GM12878 (cell line): ENCODE measurements at regions of chr1 and their contacts with region 1.

Region 1: GRCh38 chr1:81414488-81415015 is 386.2 kb upstream of the ADGRL2 start:
- DNase-seq: peak; percentile 9
- ATAC-seq: peak; percentile 98
- H3K4me3 ChIP-seq: no peak overlapping the region
- H3K27ac ChIP-seq: no peak overlapping the region
- H3K4me1 ChIP-seq: no peaks in the 10 kb centered on the region
- H3K27me3 ChIP-seq: no peaks in the 10 kb centered on the region; a peak in 1 of 4 replicates
- CTCF ChIP-seq: peak; percentile 77 to 91 (median 85)
- EP300 ChIP-seq: no peak
- POLR2A ChIP-seq: no peak
- RAD21 ChIP-seq: peak; percentile 80

Region 2: DNA sequence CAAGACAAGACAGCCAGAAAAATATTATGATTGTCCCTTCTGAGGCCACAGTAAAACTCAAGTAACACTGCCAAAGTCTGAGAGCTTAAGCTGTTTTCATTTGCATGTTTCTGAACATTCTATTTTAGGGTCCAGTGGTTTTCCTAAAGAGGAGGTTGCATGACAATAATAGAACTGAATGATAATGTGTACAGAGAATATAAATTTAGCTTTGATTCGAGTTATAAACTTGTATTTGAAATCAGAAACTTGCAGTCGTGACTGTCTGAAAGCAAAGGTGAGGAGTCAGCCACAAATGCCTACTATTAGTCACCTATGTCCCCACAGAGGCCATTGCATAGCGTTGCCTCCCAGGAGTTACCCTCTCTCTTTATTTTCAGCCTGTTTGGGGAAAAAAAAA is 23.1 kb after region 1 on chr1:
- CTCF ChIA-PET with region 1: interaction called, 10 read pairs
- POLR2A ChIA-PET with region 1: no interaction called
- RAD21 ChIA-PET with region 1: no interaction called
- SMC1A ChIA-PET with region 1: interaction called, 5 read pairs
- in situ Hi-C with region 1: no loop called
- intact Hi-C with region 1: no loop called
- DNase-seq: peak; percentile 24
- ATAC-seq: peak; percentile 87
- H3K4me3 ChIP-seq: no peak overlapping the region; the same call in 1 of the 2 replicates
- H3K27ac ChIP-seq: no peak overlapping the region
- H3K4me1 ChIP-seq: peaks cover 18% of the 10 kb centered on the region
- H3K27me3 ChIP-seq: no peaks in the 10 kb centered on the region; a peak in 1 of 4 replicates
- CTCF ChIP-seq: no peak
- EP300 ChIP-seq: no peak
- POLR2A ChIP-seq: no peak
- RAD21 ChIP-seq: no peak